Aorta (tissue), 5 donors: ENCODE measurements at regions of chr5 and their contacts with region 1.

Region 1: GRCh38 chr5:137778772-137779564 is 24.8 kb upstream of the HNRNPA0 start:
- DNase-seq: no peak
- ATAC-seq: no peak
- H3K4me3 ChIP-seq: no peak overlapping the region
- H3K27ac ChIP-seq: no peak overlapping the region
- H3K4me1 ChIP-seq: no peaks in the 10 kb centered on the region
- H3K27me3 ChIP-seq: no peaks in the 10 kb centered on the region

Region 2: DNA sequence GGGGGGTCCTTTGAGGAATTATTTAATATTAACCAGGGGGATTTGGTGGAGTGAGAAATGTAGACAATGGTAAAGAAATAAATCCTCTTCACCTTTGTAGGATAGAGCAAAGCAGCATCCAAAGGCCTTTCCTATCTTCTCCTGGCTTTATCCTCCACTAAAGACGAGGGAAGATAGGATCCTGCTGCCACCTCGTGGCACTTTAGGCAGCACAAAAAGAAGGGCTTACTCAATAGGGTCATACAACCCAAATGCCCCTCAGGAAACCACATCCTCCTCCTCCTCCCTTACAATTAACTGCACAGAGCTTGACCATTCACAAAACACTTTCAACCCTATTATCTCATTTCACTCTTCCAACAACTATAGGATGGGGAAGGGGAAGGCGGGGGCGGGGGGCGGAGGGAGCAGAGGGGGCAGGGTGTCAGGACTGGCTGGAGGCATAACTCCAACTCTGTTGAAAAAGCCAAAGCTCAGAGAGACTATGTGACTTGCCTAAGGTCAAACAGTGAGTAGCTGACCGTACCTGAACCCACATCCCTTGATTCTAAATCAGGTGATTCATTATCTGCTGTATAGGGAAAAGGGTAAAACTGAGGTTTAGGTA is 43.3 kb after region 1 on chr5:
- intact Hi-C with region 1: loop called (anchors 1 to 5 kb)
- DNase-seq: no peak
- ATAC-seq: peak; percentile 22
- H3K4me3 ChIP-seq: no peak overlapping the region
- H3K27ac ChIP-seq: no peak overlapping the region
- H3K4me1 ChIP-seq: no peaks in the 10 kb centered on the region
- H3K27me3 ChIP-seq: no peaks in the 10 kb centered on the region

Region 3: GRCh38 chr5:137945825-137946224 is 166.9 kb after region 1 on chr5:
- intact Hi-C with region 1: loop called in 1 of 2 experiments (anchors 10 kb)
- DNase-seq: no peak
- ATAC-seq: no peak
- H3K4me3 ChIP-seq: no peak overlapping the region
- H3K27ac ChIP-seq: no peak overlapping the region
- H3K4me1 ChIP-seq: no peaks in the 10 kb centered on the region
- H3K27me3 ChIP-seq: no peaks in the 10 kb centered on the region

Region 4: GRCh38 chr5:138138949-138139780 is 360.2 kb after region 1 on chr5 and contains the start of gene NME5:
- intact Hi-C with region 1: loop called in 1 of 2 experiments (anchors 10 kb)
- DNase-seq: peak; percentile 68 to 83
- ATAC-seq: peak; percentile 74
- H3K4me3 ChIP-seq: peak within 1 kb of the TSS in 1 of 2 donors; percentile 47
- H3K27ac ChIP-seq: no peak within 1 kb of the TSS
- H3K4me1 ChIP-seq: no peaks in the 10 kb centered on the region
- H3K27me3 ChIP-seq: no peaks in the 10 kb centered on the region
- total RNA-seq, gene NME5: 0.58 to 2.1 TPM